Activated CD8-positive, alpha-beta T cell treated with anti-CD3 and anti-CD28 coated beads, Interleukin-2, amount 10 ng/mL, durations not matched to agents 7 days and 5 days (primary cell): ENCODE measurements at regions of chr18 and their contacts with region 1.

Region 1: GRCh38 chr18:2571200-2572143 is at the starts of genes METTL4 and NDC80:
- DNase-seq: peak; percentile 90
- ATAC-seq: peak; percentile 81
- H3K4me3 Mint-ChIP-seq: peak within 1 kb of the TSS; percentile 98
- H3K27ac Mint-ChIP-seq: peak within 1 kb of the TSS; percentile 99
- H3K4me1 Mint-ChIP-seq: peaks cover 47% of the 10 kb centered on the region
- H3K27me3 Mint-ChIP-seq: no peaks in the 10 kb centered on the region
- total RNA-seq, gene METTL4: 22.2 to 22.3 TPM
- total RNA-seq, gene NDC80: 91.3 to 103 TPM

Region 2: DNA sequence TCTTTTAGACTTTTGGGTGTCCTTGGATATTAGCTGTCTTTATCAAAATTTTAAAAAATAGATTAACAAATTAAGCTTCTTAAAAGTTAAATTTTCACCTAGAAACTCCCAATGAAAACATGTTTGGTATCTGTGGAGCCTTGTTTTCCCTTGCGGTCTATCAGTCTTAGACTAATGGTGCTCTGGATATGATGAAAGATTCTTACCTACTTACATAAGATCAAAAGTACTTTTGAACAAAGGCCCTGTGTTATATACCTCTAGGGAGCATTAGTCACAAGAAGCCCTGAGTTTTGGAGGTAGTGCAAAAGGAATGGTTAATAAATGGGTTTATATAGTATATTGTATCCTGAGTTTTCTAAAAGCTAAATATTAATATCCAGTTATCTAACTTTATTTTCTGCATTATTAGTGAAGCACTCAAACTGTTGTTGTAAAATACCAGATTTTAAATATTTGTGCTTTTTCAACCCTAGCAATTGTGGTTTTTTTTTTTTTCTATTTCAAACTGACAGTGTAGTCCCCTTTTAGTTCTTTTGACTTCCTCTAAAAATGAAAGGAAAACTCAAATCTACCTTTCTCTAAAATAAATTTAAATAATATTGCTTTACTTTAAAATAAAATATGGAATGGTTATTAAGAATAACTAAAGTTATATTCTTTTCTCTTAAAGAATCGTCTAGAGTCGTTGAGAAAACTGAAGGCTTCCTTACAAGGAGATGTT is 18.0 kb after region 1 on chr18:
- CTCF ChIA-PET with region 1: interaction called, 8 read pairs
- POLR2A ChIA-PET with region 1: interaction called, 21 read pairs
- DNase-seq: no peak
- ATAC-seq: peak; percentile 72
- H3K4me3 Mint-ChIP-seq: peak overlapping the region; percentile 29
- H3K27ac Mint-ChIP-seq: peak overlapping the region; percentile 84
- H3K4me1 Mint-ChIP-seq: peaks cover 50% of the 10 kb centered on the region
- H3K27me3 Mint-ChIP-seq: no peaks in the 10 kb centered on the region

Region 3: GRCh38 chr18:2636126-2636631 is 64.7 kb after region 1 on chr18:
- CTCF ChIA-PET with region 1: interaction called, 5 read pairs
- POLR2A ChIA-PET with region 1: interaction called, 15 read pairs
- DNase-seq: no peak
- ATAC-seq: peak; percentile 36
- H3K4me3 Mint-ChIP-seq: peak overlapping the region; percentile 70
- H3K27ac Mint-ChIP-seq: peak overlapping the region; percentile 100
- H3K4me1 Mint-ChIP-seq: peaks cover 69% of the 10 kb centered on the region
- H3K27me3 Mint-ChIP-seq: no peaks in the 10 kb centered on the region